ENCODE measurements at regions of chr2 and their contacts with region 1.

Region 1: DNA sequence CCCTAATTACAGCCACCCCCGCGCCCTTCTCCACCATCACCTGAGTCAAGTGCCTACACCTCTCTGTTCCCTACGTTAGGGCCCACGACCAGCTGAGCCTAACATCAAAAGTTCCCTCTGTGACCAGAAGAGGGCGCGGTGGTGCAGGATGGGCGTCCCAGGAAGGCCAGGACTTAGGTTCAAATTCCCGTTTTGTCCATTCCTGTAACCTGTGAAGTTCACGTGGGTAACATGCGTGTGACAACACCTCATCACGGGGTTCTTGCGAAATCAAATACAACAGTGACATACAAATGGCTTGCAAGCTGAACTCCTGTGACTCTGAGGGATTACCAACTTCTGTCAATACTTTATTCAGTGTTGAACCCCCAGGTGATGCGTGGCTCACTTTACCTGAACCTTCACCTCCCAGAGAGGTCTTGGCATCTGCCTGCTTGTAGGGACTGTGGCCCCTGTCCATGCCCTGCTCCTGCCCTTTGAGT is 207.9 kb downstream of the ARL4C start:
- DNase-seq: peak; percentile 94
- H3K4me3 Mint-ChIP-seq: peak overlapping the region; percentile 72
- H3K27ac Mint-ChIP-seq: peak overlapping the region; percentile 99
- H3K4me1 Mint-ChIP-seq: peaks cover 71% of the 10 kb centered on the region
- H3K27me3 Mint-ChIP-seq: no peaks in the 10 kb centered on the region

Region 2: GRCh38 chr2:234135720-234136221 is 153.2 kb before region 1 on chr2:
- intact Hi-C with region 1: loop called (anchors 2 kb)
- DNase-seq: peak; percentile 84
- H3K4me3 Mint-ChIP-seq: no peak overlapping the region
- H3K27ac Mint-ChIP-seq: peak overlapping the region; percentile 57
- H3K4me1 Mint-ChIP-seq: peaks cover 21% of the 10 kb centered on the region
- H3K27me3 Mint-ChIP-seq: peaks cover 7% of the 10 kb centered on the region

Region 3: DNA sequence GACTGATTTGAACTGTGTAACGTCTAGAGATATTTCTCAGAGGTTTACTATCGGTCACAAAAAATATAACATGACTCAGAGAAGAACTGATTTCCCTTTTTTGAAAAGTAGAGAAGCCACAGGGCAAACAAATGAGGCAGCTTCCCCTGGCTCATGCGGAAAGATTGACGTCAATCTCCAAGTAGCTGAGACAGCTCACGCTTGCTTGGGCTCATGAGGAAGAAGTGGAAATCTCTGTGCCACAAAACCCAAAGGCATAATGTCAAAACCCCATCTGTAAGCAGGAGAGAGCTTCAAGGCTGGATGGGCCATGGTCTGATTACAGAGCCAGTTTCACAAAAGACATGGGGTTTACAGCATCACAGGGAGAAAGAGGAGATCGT is 19.8 kb after region 1 on chr2:
- intact Hi-C with region 1: loop called (anchors 1 kb)
- DNase-seq: peak; percentile 94
- H3K4me3 Mint-ChIP-seq: peak overlapping the region; percentile 66
- H3K27ac Mint-ChIP-seq: peak overlapping the region; percentile 97
- H3K4me1 Mint-ChIP-seq: peaks cover 54% of the 10 kb centered on the region
- H3K27me3 Mint-ChIP-seq: no peaks in the 10 kb centered on the region

Region 4: GRCh38 chr2:234377761-234378391 is 88.9 kb after region 1 on chr2:
- intact Hi-C with region 1: no loop called
- DNase-seq: no peak
- H3K4me3 Mint-ChIP-seq: no peak overlapping the region
- H3K27ac Mint-ChIP-seq: no peak overlapping the region
- H3K4me1 Mint-ChIP-seq: peaks cover 24% of the 10 kb centered on the region
- H3K27me3 Mint-ChIP-seq: no peaks in the 10 kb centered on the region

Region 5: GRCh38 chr2:234399451-234400246 is 110.6 kb after region 1 on chr2:
- intact Hi-C with region 1: loop called (anchors 1 kb)
- DNase-seq: no peak
- H3K4me3 Mint-ChIP-seq: no peak overlapping the region
- H3K27ac Mint-ChIP-seq: peak overlapping the region; percentile 62
- H3K4me1 Mint-ChIP-seq: peaks cover 41% of the 10 kb centered on the region
- H3K27me3 Mint-ChIP-seq: no peaks in the 10 kb centered on the region

Region 6: DNA sequence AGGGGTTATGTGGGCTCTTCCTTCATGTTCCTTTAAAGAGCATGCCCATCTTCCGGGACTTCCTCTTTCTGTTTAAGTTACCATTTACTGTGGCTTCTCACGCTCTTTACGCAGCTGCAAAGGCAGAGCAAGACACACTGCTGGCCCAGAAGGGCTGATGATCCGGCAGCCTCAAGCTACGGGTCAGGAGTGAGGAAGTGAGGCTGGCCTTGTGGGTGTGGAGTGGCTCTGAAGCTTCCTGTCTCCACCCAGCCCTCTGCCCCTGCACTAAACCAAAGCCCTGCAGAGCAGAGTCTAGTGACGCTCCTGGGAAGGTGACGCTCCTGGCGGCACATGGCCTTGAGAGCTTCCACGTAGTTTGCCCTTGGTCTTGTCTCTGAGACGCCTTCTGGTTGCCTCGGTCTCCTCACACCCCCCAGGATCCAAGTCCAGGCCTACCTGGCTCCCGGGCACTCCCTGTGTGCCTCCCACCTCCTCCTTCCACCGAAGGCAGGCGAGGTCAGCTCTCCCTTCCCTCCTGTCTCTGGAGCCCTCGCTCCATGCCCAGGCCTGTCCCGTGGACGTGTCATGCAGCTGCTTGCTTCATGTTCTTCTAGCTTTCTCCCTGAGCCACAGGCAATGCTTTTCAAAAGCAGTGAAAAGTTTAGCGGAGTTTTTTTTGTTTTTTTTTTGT is 157.5 kb after region 1 on chr2:
- intact Hi-C with region 1: loop called (anchors 1 kb)
- DNase-seq: peak; percentile 96
- H3K4me3 Mint-ChIP-seq: peak overlapping the region; percentile 85
- H3K27ac Mint-ChIP-seq: peak overlapping the region; percentile 100
- H3K4me1 Mint-ChIP-seq: peaks cover 80% of the 10 kb centered on the region
- H3K27me3 Mint-ChIP-seq: no peaks in the 10 kb centered on the region

Region 7: GRCh38 chr2:234463626-234464290 is 174.7 kb after region 1 on chr2:
- intact Hi-C with region 1: loop called (anchors 1 kb)
- DNase-seq: peak; percentile 92
- H3K4me3 Mint-ChIP-seq: peak overlapping the region; percentile 79
- H3K27ac Mint-ChIP-seq: peak overlapping the region; percentile 85
- H3K4me1 Mint-ChIP-seq: peaks cover 55% of the 10 kb centered on the region
- H3K27me3 Mint-ChIP-seq: no peaks in the 10 kb centered on the region

Region 8: GRCh38 chr2:234494361-234495250 is 205.6 kb after region 1 on chr2:
- intact Hi-C with region 1: loop called (anchors 1 kb)
- DNase-seq: peak; percentile 85
- H3K4me3 Mint-ChIP-seq: peak overlapping the region; percentile 90
- H3K27ac Mint-ChIP-seq: peak overlapping the region; percentile 94
- H3K4me1 Mint-ChIP-seq: peaks cover 56% of the 10 kb centered on the region
- H3K27me3 Mint-ChIP-seq: no peaks in the 10 kb centered on the region